ENCODE measurements at regions of chr7 and their contacts with region 1.

Region 1: DNA sequence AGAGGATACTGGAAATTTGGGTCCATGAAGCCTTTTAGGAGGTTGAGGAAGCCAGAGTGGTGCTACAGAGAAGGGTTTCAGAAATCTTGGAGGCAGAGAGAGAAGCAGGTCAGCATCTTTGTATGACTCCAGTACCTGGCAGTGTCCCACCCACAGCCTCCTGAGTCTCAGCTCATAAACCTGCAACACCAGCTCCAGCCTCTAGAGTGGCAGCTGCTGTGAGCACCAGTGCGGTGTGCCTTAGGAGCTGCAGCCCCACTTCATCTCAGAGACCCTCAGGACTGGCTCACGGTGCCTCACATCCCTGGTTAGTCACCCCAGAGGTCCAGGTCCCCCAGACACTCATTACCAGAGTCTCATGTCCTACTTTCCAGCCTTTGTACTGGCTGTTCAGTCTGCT is 84.8 kb upstream of the PRKAR2B start:
- DNase-seq: peak; percentile 17
- ATAC-seq: peak; percentile 55
- H3K4me3 Mint-ChIP-seq: no peak overlapping the region
- H3K27ac Mint-ChIP-seq: no peak overlapping the region
- H3K4me1 Mint-ChIP-seq: no peaks in the 10 kb centered on the region
- H3K27me3 Mint-ChIP-seq: no peaks in the 10 kb centered on the region
- CTCF ChIP-seq: peak; percentile 19

Region 2: GRCh38 chr7:106895246-106895864 is 64.4 kb before region 1 on chr7:
- CTCF ChIA-PET with region 1: no interaction called
- POLR2A ChIA-PET with region 1: no interaction called
- intact Hi-C with region 1: loop called (anchors 10 kb)
- DNase-seq: peak; percentile 41
- ATAC-seq: peak; percentile 80
- H3K4me3 Mint-ChIP-seq: no peak overlapping the region
- H3K27ac Mint-ChIP-seq: peak overlapping the region; percentile 40
- H3K4me1 Mint-ChIP-seq: peaks cover 47% of the 10 kb centered on the region
- H3K27me3 Mint-ChIP-seq: no peaks in the 10 kb centered on the region
- CTCF ChIP-seq: no peak

Region 3: GRCh38 chr7:107078517-107078966 is 118.8 kb after region 1 on chr7:
- CTCF ChIA-PET with region 1: no interaction called
- POLR2A ChIA-PET with region 1: no interaction called
- intact Hi-C with region 1: no loop called
- DNase-seq: no peak
- ATAC-seq: no peak
- H3K4me3 Mint-ChIP-seq: no peak overlapping the region
- H3K27ac Mint-ChIP-seq: no peak overlapping the region
- H3K4me1 Mint-ChIP-seq: no peaks in the 10 kb centered on the region
- H3K27me3 Mint-ChIP-seq: no peaks in the 10 kb centered on the region
- CTCF ChIP-seq: no peak

Region 4: GRCh38 chr7:107103363-107103762 is 143.6 kb after region 1 on chr7:
- CTCF ChIA-PET with region 1: no interaction called
- POLR2A ChIA-PET with region 1: no interaction called
- intact Hi-C with region 1: no loop called
- DNase-seq: peak; percentile 22
- ATAC-seq: peak; percentile 78
- H3K4me3 Mint-ChIP-seq: no peak overlapping the region
- H3K27ac Mint-ChIP-seq: peak overlapping the region; percentile 30
- H3K4me1 Mint-ChIP-seq: peaks cover 5% of the 10 kb centered on the region
- H3K27me3 Mint-ChIP-seq: peaks cover 1% of the 10 kb centered on the region
- CTCF ChIP-seq: no peak